SK-N-SH (cell line): ENCODE measurements at regions of chr5 and their contacts with region 1.

Region 1: DNA sequence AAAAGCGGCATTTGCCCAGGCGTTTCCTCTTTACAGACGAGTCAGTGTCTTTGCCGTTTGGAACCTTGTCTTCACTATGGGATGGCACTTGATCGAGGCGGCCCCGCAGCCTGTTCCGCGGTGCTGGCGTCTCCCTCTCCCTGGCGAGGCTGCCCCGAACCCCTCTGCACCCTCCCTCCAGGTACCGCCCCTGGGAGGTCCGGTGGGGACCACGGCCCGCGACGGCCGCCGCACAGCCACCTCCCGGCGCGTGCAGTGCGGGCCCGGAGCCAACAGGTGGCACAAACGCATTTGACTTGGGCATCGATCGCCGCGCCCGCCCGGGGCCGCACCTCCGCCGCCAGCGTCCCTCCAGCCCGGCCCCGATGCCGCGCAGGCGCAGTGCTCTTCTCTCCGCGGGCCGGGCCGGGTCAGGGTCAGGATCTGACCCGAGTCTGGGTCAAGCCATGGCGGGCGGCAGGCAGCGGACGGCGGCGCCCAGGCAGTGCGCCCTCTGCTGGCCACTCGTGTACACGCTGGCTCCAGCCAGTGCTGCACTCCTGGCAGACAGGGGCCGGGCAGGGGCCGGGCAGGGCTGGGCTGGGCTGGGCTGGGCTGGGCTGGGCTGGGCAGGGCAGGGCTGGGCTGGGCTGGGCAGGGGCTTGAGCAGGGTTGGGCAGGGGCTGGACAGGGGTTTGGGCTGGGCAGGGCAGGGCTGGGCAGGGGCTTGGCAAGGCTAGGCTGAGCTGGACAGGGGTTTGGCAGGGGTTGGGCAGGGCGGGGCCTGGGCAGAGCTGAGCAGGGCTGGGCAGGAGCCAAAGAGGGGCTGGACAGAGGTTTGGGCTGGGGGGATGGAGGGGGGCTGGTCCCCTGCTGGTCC is 155.8 kb upstream of the IRX4 start:
- DNase-seq: peak; percentile 90
- H3K4me3 ChIP-seq: peak overlapping the region; percentile 36 to 56
- H3K27ac ChIP-seq: no peak overlapping the region
- H3K4me1 ChIP-seq: no peaks in the 10 kb centered on the region; a peak in 1 of 4 replicates
- H3K27me3 ChIP-seq: peaks cover 48% of the 10 kb centered on the region; the same call in 1 of the 2 replicates
- CTCF ChIP-seq: peak; percentile 71
- EP300 ChIP-seq: no peak
- RAD21 ChIP-seq: peak; percentile 36

Region 2: DNA sequence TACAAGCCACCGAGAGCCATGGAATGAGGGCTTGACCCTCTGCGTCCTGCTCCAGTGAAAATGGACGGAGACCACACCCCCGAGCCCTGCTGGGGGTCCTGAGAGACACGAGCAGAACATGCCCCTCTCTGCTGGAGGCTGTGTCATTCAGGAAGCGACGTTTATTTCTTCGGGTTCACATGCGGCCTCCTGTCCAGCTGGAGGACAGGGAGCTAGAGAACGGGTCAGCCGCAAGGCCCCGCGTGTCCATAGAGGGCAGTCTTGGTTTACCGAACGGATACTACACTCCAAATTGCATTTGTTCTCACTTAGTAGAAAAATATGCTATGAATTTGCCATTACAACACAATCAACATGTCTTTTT is 275.0 kb before region 1 on chr5:
- CTCF ChIA-PET with region 1: interaction called, 13 read pairs
- POLR2A ChIA-PET with region 1: no interaction called
- DNase-seq: peak; percentile 78
- H3K4me3 ChIP-seq: peak overlapping the region in 1 of 2 experiments; percentile 14; a peak in 1 of 4 replicates
- H3K27ac ChIP-seq: no peak overlapping the region
- H3K4me1 ChIP-seq: no peaks in the 10 kb centered on the region
- H3K27me3 ChIP-seq: peaks cover 89% of the 10 kb centered on the region
- CTCF ChIP-seq: peak; percentile 82
- EP300 ChIP-seq: no peak
- RAD21 ChIP-seq: peak; percentile 86

Region 3: GRCh38 chr5:1950708-1951103 is 87.8 kb before region 1 on chr5:
- CTCF ChIA-PET with region 1: no interaction called
- POLR2A ChIA-PET with region 1: no interaction called
- DNase-seq: no peak
- H3K4me3 ChIP-seq: no peak overlapping the region
- H3K27ac ChIP-seq: no peak overlapping the region
- H3K4me1 ChIP-seq: no peaks in the 10 kb centered on the region
- H3K27me3 ChIP-seq: peaks cover 63% of the 10 kb centered on the region; the same call in 1 of the 2 replicates
- CTCF ChIP-seq: no peak
- EP300 ChIP-seq: no peak
- RAD21 ChIP-seq: no peak

Region 4: DNA sequence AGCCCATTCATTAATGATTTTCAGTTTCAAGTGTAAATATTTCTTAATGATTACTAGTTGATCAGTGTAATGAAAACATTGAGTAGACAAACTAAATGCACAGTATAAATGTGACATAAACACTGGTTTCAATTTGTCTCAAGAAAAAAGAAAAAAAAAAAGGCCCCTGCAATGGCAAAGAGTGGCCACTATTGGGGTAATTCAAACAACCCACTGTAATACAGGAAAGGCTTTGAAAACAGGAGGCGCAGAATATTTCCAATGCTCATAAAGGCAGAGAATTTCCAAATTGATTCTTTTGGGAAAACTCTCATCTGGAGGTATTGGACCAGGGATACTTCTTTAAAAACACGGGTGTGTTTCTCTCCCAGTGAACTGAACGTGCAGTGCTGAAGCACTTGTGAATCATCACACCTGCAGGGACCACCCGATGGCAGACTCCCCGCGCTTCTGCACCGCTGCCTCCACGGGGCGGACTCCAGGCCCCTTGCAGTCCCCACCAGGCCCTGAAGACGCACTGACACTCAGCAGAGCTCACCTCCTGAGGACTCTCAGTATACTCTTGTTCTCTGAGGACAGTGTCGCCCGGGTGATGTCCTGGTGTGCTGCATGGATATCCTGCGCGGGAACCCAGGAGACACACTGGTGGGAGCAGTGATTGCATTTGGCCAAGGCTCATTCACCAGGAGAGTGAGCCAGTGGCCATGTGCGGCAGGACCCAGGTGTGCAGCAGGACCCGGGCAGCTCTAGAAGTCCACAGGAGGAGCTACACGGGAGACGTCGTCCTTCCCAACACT is 71.8 kb after region 1 on chr5:
- CTCF ChIA-PET with region 1: no interaction called
- POLR2A ChIA-PET with region 1: no interaction called
- DNase-seq: no peak
- H3K4me3 ChIP-seq: no peak overlapping the region
- H3K27ac ChIP-seq: no peak overlapping the region
- H3K4me1 ChIP-seq: no peaks in the 10 kb centered on the region
- H3K27me3 ChIP-seq: peaks cover 26% of the 10 kb centered on the region
- CTCF ChIP-seq: no peak
- EP300 ChIP-seq: no peak
- RAD21 ChIP-seq: no peak

Region 5: GRCh38 chr5:2207952-2208544 is 169.5 kb after region 1 on chr5:
- CTCF ChIA-PET with region 1: no interaction called
- POLR2A ChIA-PET with region 1: no interaction called
- DNase-seq: peak; percentile 44
- H3K4me3 ChIP-seq: peak overlapping the region in 1 of 2 experiments; percentile 41; a peak in 1 of 4 replicates
- H3K27ac ChIP-seq: no peak overlapping the region
- H3K4me1 ChIP-seq: no peaks in the 10 kb centered on the region
- H3K27me3 ChIP-seq: peaks cover 55% of the 10 kb centered on the region
- CTCF ChIP-seq: peak; percentile 40
- EP300 ChIP-seq: no peak
- RAD21 ChIP-seq: peak; percentile 17; the same call in 1 of the 2 replicates